ENCODE measurements at regions of chr14 and their contacts with region 1.

Region 1: DNA sequence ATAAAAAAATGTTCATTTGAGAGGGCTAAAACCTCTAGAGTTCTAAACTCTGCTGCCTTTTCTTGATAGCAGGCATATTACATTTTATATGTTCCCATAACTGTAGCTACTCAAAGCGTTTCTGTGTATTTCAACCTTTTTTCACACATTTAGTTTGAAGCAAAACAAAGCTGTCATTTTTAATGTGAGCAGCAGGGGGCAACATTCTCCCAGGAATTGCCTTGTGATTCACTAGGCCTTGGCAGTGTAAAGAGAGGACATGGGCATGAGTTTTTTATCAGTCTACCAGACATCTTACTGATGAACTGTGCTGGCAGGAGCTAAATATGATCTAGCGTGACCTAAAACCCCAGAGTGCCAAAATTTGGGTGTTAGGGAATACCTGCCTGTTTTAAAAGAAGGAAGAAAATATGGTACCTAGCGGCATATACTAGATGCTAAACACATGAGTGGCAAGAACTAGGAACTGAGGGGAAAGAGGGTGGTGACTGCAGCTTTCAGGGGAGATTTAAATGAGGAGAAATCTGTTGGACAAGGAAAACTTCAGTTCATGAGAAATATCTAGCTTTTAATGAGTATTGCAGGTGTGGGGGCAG is 65.3 kb downstream of the IFT43 start:
- DNase-seq: no peak
- ATAC-seq: no peak
- H3K4me3 ChIP-seq: no peak overlapping the region
- H3K27ac ChIP-seq: no peak overlapping the region
- H3K4me1 ChIP-seq: no peaks in the 10 kb centered on the region
- H3K27me3 ChIP-seq: no peaks in the 10 kb centered on the region

Region 2: GRCh38 chr14:76115010-76115422 is 64.1 kb after region 1 on chr14:
- intact Hi-C with region 1: no loop called
- DNase-seq: no peak
- ATAC-seq: no peak
- H3K4me3 ChIP-seq: no peak overlapping the region
- H3K27ac ChIP-seq: no peak overlapping the region
- H3K4me1 ChIP-seq: no peaks in the 10 kb centered on the region
- H3K27me3 ChIP-seq: no peaks in the 10 kb centered on the region

Region 3: DNA sequence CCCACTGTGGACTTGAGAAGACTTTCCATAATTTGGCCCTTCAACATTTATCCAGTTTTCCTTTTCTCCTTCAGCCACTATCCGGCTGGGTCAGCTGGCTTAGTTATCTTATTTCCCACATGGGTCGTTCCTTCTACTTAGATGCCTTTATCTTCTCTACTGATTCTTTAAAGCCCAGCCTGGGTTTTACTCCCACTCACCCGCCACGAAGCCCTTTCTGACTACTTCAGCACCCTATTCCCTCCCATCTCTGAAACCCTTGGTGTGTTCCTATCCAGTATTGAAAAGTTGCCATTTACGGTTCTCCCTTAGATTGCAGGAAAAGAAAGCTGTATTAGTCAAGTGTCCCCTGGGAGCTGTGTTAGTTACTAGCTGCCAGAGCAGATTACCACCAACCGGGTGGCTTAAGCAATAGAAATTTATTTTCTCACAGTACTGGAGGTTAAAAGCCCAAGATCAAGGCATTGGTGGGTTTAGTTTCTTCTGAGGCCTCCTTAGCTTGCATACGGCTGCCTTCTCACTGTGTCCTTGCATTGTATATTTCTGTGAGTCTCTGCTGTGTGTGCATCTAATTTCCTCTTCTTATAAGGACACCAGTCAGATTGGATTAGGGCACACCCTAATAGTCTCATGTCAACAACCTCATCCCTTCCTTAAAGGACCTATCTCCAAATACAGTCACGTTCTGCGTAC is 206.4 kb after region 1 on chr14:
- intact Hi-C with region 1: no loop called
- DNase-seq: no peak
- ATAC-seq: peak; percentile 58
- H3K4me3 ChIP-seq: no peak overlapping the region
- H3K27ac ChIP-seq: no peak overlapping the region
- H3K4me1 ChIP-seq: peaks cover 0 to 3% of the 10 kb centered on the region in 2 donors
- H3K27me3 ChIP-seq: no peaks in the 10 kb centered on the region

Region 4: GRCh38 chr14:76352639-76353281 is 301.9 kb after region 1 on chr14:
- intact Hi-C with region 1: loop called (anchors 2 to 5 kb)
- DNase-seq: peak; percentile 60 to 88
- ATAC-seq: peak; percentile 82
- H3K4me3 ChIP-seq: no peak overlapping the region
- H3K27ac ChIP-seq: no peak overlapping the region
- H3K4me1 ChIP-seq: no peaks in the 10 kb centered on the region
- H3K27me3 ChIP-seq: no peaks in the 10 kb centered on the region

Region 5: GRCh38 chr14:76386915-76387782 is 336.3 kb after region 1 on chr14:
- intact Hi-C with region 1: loop called in 1 of 2 experiments (anchors 10 kb)
- DNase-seq: peak; percentile 73 to 88
- ATAC-seq: peak; percentile 90
- H3K4me3 ChIP-seq: no peak overlapping the region
- H3K27ac ChIP-seq: no peak overlapping the region
- H3K4me1 ChIP-seq: no peaks in the 10 kb centered on the region
- H3K27me3 ChIP-seq: peaks cover 0 to 2% of the 10 kb centered on the region in 2 donors

Measured in aorta (tissue), 5 donors.